Heart left ventricle (tissue), 16 donors: ENCODE measurements at regions of chr5 and their contacts with region 1.

Region 1: GRCh38 chr5:65925601-65926275 is 637 bp upstream of the ERBIN start:
- DNase-seq: peak; percentile 85 to 92 (median 87)
- ATAC-seq: peak; percentile 62 to 94 (median 86)
- H3K4me3 ChIP-seq: peak overlapping the region; percentile 65 to 97 (median 91)
- H3K27ac ChIP-seq: peak overlapping the region; percentile 96 to 100 (median 99)
- H3K4me1 ChIP-seq: peaks cover 0 to 38% (median 12%) of the 10 kb centered on the region in 12 donors
- H3K27me3 ChIP-seq: no peaks in the 10 kb centered on the region
- CTCF ChIP-seq: peak in 11 of 12 donors; percentile 6 to 63 (median 39)
- POLR2A ChIP-seq: peak in 1 of 2 donors; percentile 80

Region 2: GRCh38 chr5:64273276-64273675 is 1652.5 kb before region 1 on chr5:
- intact Hi-C with region 1: no loop called
- DNase-seq: no peak
- ATAC-seq: no peak
- H3K4me3 ChIP-seq: no peak overlapping the region
- H3K27ac ChIP-seq: no peak overlapping the region
- H3K4me1 ChIP-seq: peaks cover 0 to 22% (median 7%) of the 10 kb centered on the region in 12 donors
- H3K27me3 ChIP-seq: no peaks in the 10 kb centered on the region
- CTCF ChIP-seq: no peak
- POLR2A ChIP-seq: no peak

Region 3: DNA sequence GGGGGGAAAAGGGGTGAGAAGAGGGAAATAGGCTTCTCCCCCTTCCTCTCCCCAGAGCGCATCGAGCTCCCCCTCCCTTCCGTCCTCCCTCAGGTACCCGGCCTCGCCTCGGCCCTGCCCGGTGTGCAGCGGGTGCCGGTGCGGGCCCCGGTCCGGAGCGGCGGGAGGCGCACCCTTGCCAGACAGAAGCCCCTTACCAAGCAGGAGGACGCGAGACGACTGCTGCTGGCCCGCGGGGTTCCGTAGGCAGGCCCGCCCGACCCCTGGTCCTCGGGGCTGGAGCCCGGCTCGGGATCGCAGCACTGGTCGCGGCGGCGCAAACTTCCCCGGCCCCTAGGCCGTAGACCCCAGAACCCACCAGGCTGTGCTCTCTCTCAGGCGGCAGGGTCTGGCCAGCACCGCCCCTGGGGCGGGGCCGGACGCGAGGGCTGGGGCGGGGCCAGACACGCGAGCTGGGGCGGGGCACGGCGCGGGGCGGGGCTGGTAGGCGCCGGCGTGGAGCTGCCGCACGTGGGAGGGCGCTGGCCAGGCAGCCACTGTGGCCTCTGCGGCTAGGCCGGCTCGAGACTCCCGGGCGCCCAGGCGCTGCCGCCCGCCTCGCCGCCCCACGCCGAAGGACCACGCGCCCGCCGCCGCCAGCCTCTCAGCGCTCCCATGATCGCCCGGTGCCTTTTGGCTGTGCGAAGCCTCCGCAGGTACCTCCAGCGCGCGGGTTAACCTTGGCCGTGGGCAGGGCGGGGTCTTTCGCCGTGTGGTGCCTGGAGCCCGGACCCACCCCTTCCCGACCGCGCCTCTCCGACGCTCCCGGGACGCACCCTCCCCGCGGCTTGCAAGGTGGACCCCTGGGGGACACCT is 203.8 kb before region 1 on chr5 and contains the starts of genes NLN and SGTB:
- intact Hi-C with region 1: loop called in 2 of 10 experiments (anchors 2 to 5 kb)
- DNase-seq: peak; percentile 89 to 95 (median 90)
- ATAC-seq: peak; percentile 87 to 99 (median 98)
- H3K4me3 ChIP-seq: peak within 1 kb of the TSS; percentile 78 to 98 (median 94)
- H3K27ac ChIP-seq: peak within 1 kb of the TSS in 11 of 12 donors; percentile 61 to 87 (median 79)
- H3K4me1 ChIP-seq: peaks cover 0 to 46% (median 10%) of the 10 kb centered on the region in 12 donors
- H3K27me3 ChIP-seq: no peaks in the 10 kb centered on the region
- CTCF ChIP-seq: no peak
- POLR2A ChIP-seq: peak in 1 of 2 donors; percentile 35
- total RNA-seq, gene NLN: 5.3 to 28.2 (median 14.7) TPM
- total RNA-seq, gene SGTB: 2.9 to 14.4 (median 7.1) TPM

Region 4: GRCh38 chr5:65742565-65743231 is 183.0 kb before region 1 on chr5:
- intact Hi-C with region 1: loop called in 1 of 10 experiments (anchors 10 kb)
- DNase-seq: no peak
- ATAC-seq: peak in 1 of 4 donors; percentile 73
- H3K4me3 ChIP-seq: no peak overlapping the region
- H3K27ac ChIP-seq: no peak overlapping the region
- H3K4me1 ChIP-seq: peaks cover 0 to 5% (median 0%) of the 10 kb centered on the region in 12 donors
- H3K27me3 ChIP-seq: no peaks in the 10 kb centered on the region
- CTCF ChIP-seq: peak; percentile 30 to 61 (median 52)
- POLR2A ChIP-seq: no peak

Region 5: GRCh38 chr5:65760504-65761275 is 165.0 kb before region 1 on chr5:
- intact Hi-C with region 1: loop called in 1 of 10 experiments (anchors 10 kb)
- DNase-seq: peak in 4 of 5 donors; percentile 26 to 45 (median 42)
- ATAC-seq: peak; percentile 71 to 93 (median 86)
- H3K4me3 ChIP-seq: no peak overlapping the region
- H3K27ac ChIP-seq: peak overlapping the region in 1 of 12 donors; percentile 26
- H3K4me1 ChIP-seq: peaks cover 0 to 11% (median 2%) of the 10 kb centered on the region in 12 donors
- H3K27me3 ChIP-seq: no peaks in the 10 kb centered on the region
- CTCF ChIP-seq: peak in 9 of 12 donors; percentile 28 to 67 (median 53)
- POLR2A ChIP-seq: no peak

Region 6: GRCh38 chr5:65880496-65881072 is 45.2 kb before region 1 on chr5:
- intact Hi-C with region 1: no loop called
- DNase-seq: no peak
- ATAC-seq: no peak
- H3K4me3 ChIP-seq: no peak overlapping the region
- H3K27ac ChIP-seq: no peak overlapping the region
- H3K4me1 ChIP-seq: peaks cover 0 to 3% (median 0%) of the 10 kb centered on the region in 12 donors
- H3K27me3 ChIP-seq: no peaks in the 10 kb centered on the region
- CTCF ChIP-seq: no peak
- POLR2A ChIP-seq: no peak

Region 7: DNA sequence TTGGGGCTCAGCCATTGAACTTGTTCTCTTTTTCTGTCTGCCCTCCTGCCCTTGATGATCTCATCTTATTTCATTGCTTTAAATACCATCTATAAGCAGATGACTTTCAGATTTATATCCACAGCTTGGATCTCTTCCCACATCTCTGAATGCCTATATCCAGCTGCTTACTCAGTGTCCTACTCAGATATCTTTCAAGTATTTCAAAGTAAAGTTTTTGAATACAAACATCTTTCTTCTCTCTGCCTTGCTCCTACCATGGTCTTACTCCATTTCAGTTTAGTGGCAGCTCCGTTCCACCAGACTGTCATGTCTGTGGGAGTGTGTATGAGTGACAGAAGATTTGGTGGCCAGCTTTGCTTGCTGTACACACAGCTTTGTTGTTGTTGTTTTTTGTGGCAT is 60.3 kb after region 1 on chr5:
- intact Hi-C with region 1: loop called in 1 of 10 experiments (anchors 2 kb)
- DNase-seq: no peak
- ATAC-seq: peak in 1 of 4 donors; percentile 11
- H3K4me3 ChIP-seq: no peak overlapping the region
- H3K27ac ChIP-seq: no peak overlapping the region
- H3K4me1 ChIP-seq: peaks cover 0 to 15% (median 0%) of the 10 kb centered on the region in 12 donors
- H3K27me3 ChIP-seq: no peaks in the 10 kb centered on the region
- CTCF ChIP-seq: no peak
- POLR2A ChIP-seq: no peak

Region 8: GRCh38 chr5:66010476-66010875 is 84.7 kb after region 1 on chr5:
- intact Hi-C with region 1: loop called in 2 of 10 experiments (anchors 5 to 10 kb)
- DNase-seq: no peak
- ATAC-seq: no peak
- H3K4me3 ChIP-seq: no peak overlapping the region
- H3K27ac ChIP-seq: no peak overlapping the region
- H3K4me1 ChIP-seq: peaks cover 0 to 9% (median 0%) of the 10 kb centered on the region in 12 donors
- H3K27me3 ChIP-seq: no peaks in the 10 kb centered on the region
- CTCF ChIP-seq: no peak
- POLR2A ChIP-seq: no peak

Region 9: DNA sequence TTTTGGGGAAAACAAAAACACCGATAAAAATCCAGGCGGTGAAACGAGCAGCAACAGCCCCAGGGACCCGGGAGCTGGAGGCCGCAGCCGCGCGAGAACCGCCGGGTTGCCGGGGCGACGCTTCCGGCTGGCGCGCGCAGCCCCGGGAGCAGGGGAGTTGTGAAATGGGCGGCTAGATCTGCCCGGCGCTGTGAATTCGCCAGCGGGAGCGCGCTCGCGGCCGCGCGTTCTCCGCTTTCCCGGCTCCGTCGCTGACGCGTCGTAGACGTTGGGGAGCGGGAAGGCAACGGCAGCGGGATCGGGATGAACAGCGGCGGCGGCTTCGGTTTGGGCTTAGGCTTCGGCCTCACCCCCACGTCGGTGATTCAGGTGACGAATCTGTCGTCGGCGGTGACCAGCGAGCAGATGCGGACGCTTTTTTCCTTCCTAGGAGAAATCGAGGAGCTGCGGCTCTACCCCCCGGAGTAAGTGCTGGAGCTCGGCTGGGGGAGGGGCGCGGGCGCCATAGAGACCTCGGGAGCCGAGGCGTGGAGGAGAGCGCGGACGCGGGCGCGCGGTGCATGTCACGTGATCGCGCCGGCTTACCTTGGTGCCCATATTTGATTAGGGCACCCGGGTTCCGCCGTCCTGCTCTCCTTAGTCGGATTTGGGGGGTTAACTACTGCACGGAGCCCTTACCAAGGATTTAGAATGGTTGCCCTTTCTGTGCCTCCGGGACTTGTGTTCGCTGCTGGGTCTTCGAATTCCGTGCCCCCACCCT is 218.5 kb after region 1 on chr5 and contains the start of gene SREK1:
- intact Hi-C with region 1: loop called (anchors 1 to 10 kb)
- DNase-seq: peak; percentile 91 to 96 (median 94)
- ATAC-seq: peak; percentile 95 to 98 (median 96)
- H3K4me3 ChIP-seq: peak within 1 kb of the TSS; percentile 70 to 95 (median 84)
- H3K27ac ChIP-seq: peak within 1 kb of the TSS; percentile 95 to 100 (median 99)
- H3K4me1 ChIP-seq: peaks cover 4 to 44% (median 32%) of the 10 kb centered on the region in 12 donors
- H3K27me3 ChIP-seq: no peaks in the 10 kb centered on the region
- CTCF ChIP-seq: no peak
- POLR2A ChIP-seq: peak in 1 of 2 donors; percentile 76
- total RNA-seq, gene SREK1: 13.5 to 34.2 (median 28.4) TPM